Naive thymus-derived CD4-positive, alpha-beta T cell (primary cell): ENCODE measurements at regions of chr9 and their contacts with region 1.

Region 1: DNA sequence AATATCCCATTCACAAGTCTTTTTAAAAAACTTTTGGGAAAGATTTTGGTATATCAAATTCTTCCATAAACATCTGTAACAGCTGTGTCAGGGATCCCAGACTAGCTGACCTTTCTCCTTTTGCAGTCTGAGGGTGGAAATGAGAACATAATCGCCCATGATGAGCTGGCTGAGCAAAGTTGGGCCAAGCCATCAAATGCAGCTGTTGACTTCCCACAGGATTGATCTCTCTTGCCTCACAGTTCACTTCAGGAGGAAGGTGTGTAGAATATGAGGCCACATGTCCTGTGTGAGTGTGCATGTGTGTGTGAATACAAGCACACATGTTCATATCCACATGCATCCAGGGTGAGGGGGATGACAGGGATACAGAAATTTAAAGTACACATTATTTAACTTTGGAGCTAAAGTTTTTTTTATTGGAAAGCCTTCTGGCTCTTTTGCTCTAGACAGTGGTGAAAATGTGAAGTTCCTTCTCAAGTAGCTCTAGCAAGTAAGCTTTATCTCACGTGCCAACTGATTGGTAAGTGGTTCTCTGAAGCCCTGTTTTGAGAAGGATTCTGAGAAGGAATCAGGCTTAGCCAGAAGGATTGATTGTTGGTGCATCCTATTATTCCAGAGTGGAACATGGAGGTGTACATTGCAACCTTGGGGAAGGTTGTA is 468.8 kb upstream of the DMAC1 start:
- DNase-seq: no peak
- ATAC-seq: no peak
- H3K4me3 ChIP-seq: no peak overlapping the region
- H3K4me3 Mint-ChIP-seq: no peak overlapping the region
- H3K27ac ChIP-seq: no peak overlapping the region
- H3K27ac Mint-ChIP-seq: no peak overlapping the region
- H3K4me1 ChIP-seq: no peaks in the 10 kb centered on the region
- H3K4me1 Mint-ChIP-seq: no peaks in the 10 kb centered on the region
- H3K27me3 ChIP-seq: no peaks in the 10 kb centered on the region
- H3K27me3 Mint-ChIP-seq: peaks cover 0 to 8% (median 3%) of the 10 kb centered on the region in 5 donors

Region 2: GRCh38 chr9:8143677-8144076 is 124.7 kb before region 1 on chr9:
- CTCF ChIA-PET with region 1: no interaction called
- POLR2A ChIA-PET with region 1: no interaction called
- intact Hi-C with region 1: no loop called
- DNase-seq: no peak
- ATAC-seq: no peak
- H3K4me3 ChIP-seq: no peak overlapping the region
- H3K4me3 Mint-ChIP-seq: no peak overlapping the region
- H3K27ac ChIP-seq: no peak overlapping the region
- H3K27ac Mint-ChIP-seq: no peak overlapping the region
- H3K4me1 ChIP-seq: no peaks in the 10 kb centered on the region
- H3K4me1 Mint-ChIP-seq: no peaks in the 10 kb centered on the region
- H3K27me3 ChIP-seq: no peaks in the 10 kb centered on the region
- H3K27me3 Mint-ChIP-seq: peaks cover 0 to 3% (median 0%) of the 10 kb centered on the region in 5 donors

Region 3: GRCh38 chr9:8179381-8180053 is 88.8 kb before region 1 on chr9:
- CTCF ChIA-PET with region 1: no interaction called
- POLR2A ChIA-PET with region 1: no interaction called
- intact Hi-C with region 1: loop called in 1 of 2 experiments (anchors 5 kb)
- DNase-seq: no peak
- ATAC-seq: no peak
- H3K4me3 ChIP-seq: no peak overlapping the region
- H3K4me3 Mint-ChIP-seq: no peak overlapping the region
- H3K27ac ChIP-seq: no peak overlapping the region
- H3K27ac Mint-ChIP-seq: no peak overlapping the region
- H3K4me1 ChIP-seq: no peaks in the 10 kb centered on the region
- H3K4me1 Mint-ChIP-seq: peaks cover 0 to 5% (median 0%) of the 10 kb centered on the region in 7 donors
- H3K27me3 ChIP-seq: no peaks in the 10 kb centered on the region
- H3K27me3 Mint-ChIP-seq: peaks cover 0 to 4% (median 0%) of the 10 kb centered on the region in 5 donors

Region 4: DNA sequence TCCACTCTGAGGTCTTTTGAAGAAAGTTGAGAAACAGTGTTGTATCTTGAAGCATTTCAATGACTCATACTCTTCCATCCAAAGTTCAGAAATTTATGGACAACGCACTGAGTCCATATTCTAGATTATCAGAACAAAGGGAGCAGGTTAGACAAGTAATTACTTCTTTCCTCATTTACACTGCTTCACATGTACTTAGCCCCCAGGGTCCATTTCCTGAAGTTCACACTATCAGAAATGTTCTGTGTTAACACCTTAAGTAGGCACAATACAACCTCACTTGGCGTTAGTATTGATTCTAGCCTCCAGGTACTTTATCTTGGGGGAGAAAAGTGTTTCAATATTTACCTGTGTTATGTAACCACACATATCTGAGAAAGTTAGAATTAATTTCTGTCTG is 19.2 kb after region 1 on chr9:
- CTCF ChIA-PET with region 1: no interaction called
- POLR2A ChIA-PET with region 1: no interaction called
- intact Hi-C with region 1: no loop called
- DNase-seq: no peak
- ATAC-seq: no peak
- H3K4me3 ChIP-seq: no peak overlapping the region
- H3K4me3 Mint-ChIP-seq: no peak overlapping the region
- H3K27ac ChIP-seq: no peak overlapping the region
- H3K27ac Mint-ChIP-seq: no peak overlapping the region
- H3K4me1 ChIP-seq: no peaks in the 10 kb centered on the region
- H3K4me1 Mint-ChIP-seq: no peaks in the 10 kb centered on the region
- H3K27me3 ChIP-seq: no peaks in the 10 kb centered on the region
- H3K27me3 Mint-ChIP-seq: peaks cover 0 to 16% (median 5%) of the 10 kb centered on the region in 5 donors

Region 5: GRCh38 chr9:8963885-8964284 is 695.5 kb after region 1 on chr9:
- CTCF ChIA-PET with region 1: no interaction called
- POLR2A ChIA-PET with region 1: no interaction called
- intact Hi-C with region 1: no loop called
- DNase-seq: no peak
- ATAC-seq: no peak
- H3K4me3 ChIP-seq: no peak overlapping the region
- H3K4me3 Mint-ChIP-seq: no peak overlapping the region
- H3K27ac ChIP-seq: no peak overlapping the region
- H3K27ac Mint-ChIP-seq: no peak overlapping the region
- H3K4me1 ChIP-seq: no peaks in the 10 kb centered on the region
- H3K4me1 Mint-ChIP-seq: no peaks in the 10 kb centered on the region
- H3K27me3 ChIP-seq: no peaks in the 10 kb centered on the region
- H3K27me3 Mint-ChIP-seq: peaks cover 0 to 5% (median 0%) of the 10 kb centered on the region in 5 donors